Sigmoid colon (tissue), 7 donors: ENCODE measurements at regions of chr3 and their contacts with region 1.

Region 1: GRCh38 chr3:32947789-32948238 is 3.6 kb upstream of the CCR4 start:
- DNase-seq: peak; percentile 77
- H3K4me3 ChIP-seq: no peak overlapping the region
- H3K27ac ChIP-seq: no peak overlapping the region
- H3K4me1 ChIP-seq: no peaks in the 10 kb centered on the region
- H3K27me3 ChIP-seq: no peaks in the 10 kb centered on the region
- CTCF ChIP-seq: peak; percentile 9 to 55 (median 46)
- EP300 ChIP-seq: no peak
- POLR2A ChIP-seq: no peak

Region 2: DNA sequence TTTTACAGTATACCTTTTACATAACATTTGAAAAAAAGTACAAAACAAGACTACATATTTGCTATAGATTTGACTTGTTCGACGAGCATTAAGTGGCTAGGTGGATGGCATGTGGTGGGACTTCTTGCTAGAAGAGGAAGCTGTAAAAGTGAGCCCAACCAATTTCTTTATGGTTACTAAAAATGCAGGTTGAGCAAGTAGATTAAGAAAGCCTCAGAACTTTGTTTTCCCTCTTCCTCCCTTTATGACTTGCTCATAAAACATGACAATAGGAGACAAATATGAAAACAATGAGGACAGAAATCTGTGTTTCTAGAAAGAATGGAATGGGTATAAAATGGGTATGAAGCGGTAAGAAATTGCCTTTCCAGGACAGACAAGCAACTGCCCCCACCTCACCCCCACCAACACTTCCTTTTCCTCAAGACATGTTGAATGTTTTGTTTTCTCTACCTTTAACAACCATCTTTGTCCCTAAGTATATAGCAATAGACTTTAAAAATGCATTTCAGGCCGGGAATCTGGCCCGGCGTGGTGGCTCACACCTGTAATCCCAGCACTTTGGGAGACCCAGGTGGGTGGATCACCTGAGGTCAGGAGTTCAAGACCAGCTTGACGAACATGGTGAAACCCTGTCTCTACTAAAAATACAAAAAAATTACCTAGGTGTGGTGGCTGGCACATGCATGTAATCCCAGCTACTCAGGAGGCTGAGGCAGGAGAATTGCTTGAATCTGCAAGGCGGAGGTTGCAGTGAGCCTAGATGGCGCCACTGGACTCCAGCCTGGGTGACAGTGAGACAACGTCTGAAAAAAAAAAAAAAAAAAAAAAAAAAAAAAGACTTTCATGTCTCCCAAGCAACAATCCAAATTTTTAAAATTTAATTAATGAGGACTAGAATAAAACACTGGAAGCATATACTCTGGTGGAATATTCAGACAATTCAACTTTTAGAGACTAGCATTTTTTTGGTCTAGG is 46.1 kb before region 1 on chr3:
- intact Hi-C with region 1: no loop called
- DNase-seq: no peak
- H3K4me3 ChIP-seq: no peak overlapping the region
- H3K27ac ChIP-seq: no peak overlapping the region
- H3K4me1 ChIP-seq: no peaks in the 10 kb centered on the region
- H3K27me3 ChIP-seq: peaks cover 0 to 11% (median 0%) of the 10 kb centered on the region in 3 donors
- CTCF ChIP-seq: no peak
- EP300 ChIP-seq: no peak
- POLR2A ChIP-seq: no peak

Region 3: DNA sequence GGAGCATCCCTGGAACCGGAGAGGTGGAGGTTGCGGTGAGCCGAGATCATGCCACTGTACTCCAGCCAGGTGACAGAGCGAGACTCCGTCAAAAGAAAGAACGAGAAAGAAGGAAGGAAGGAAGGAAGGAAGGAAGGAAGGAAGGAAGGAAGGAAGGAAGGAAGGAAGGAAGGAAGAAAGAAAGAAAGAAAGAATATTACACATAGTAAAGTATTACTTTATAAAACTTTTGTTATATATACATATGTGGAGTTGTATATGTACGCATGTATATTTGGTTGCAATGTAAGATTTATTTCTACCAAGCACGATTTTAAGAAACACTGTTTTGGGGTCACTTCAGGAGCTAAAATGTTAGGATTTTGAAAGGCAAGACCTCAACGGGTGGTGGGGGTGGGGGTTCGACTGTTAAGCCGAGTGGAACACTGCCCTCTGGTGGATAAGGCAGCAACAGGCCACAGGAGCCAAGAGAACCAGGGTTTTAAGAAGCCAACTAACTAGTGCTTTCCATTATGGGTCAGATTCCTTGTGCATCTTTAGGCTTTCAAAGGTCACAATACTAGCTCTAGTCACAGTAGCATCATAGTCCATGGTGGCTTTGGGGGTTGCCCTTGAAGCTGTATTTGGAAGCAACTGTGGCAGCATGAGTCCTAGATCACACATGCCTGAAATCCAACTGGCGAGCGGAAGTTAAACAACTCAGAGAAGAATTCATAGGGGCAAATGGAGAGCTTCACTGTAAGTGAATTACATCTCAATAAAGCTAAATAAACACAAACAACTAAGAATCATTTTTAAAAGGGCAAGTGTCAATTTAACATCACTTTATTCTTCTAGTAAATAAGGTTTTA is 126.6 kb after region 1 on chr3:
- intact Hi-C with region 1: loop called (anchors 5 kb)
- DNase-seq: no peak
- H3K4me3 ChIP-seq: no peak overlapping the region
- H3K27ac ChIP-seq: no peak overlapping the region
- H3K4me1 ChIP-seq: peaks cover 0 to 11% (median 3%) of the 10 kb centered on the region in 4 donors
- H3K27me3 ChIP-seq: no peaks in the 10 kb centered on the region
- CTCF ChIP-seq: peak in 3 of 4 experiments; percentile 65 to 77 (median 77)
- EP300 ChIP-seq: no peak
- POLR2A ChIP-seq: no peak

Region 4: DNA sequence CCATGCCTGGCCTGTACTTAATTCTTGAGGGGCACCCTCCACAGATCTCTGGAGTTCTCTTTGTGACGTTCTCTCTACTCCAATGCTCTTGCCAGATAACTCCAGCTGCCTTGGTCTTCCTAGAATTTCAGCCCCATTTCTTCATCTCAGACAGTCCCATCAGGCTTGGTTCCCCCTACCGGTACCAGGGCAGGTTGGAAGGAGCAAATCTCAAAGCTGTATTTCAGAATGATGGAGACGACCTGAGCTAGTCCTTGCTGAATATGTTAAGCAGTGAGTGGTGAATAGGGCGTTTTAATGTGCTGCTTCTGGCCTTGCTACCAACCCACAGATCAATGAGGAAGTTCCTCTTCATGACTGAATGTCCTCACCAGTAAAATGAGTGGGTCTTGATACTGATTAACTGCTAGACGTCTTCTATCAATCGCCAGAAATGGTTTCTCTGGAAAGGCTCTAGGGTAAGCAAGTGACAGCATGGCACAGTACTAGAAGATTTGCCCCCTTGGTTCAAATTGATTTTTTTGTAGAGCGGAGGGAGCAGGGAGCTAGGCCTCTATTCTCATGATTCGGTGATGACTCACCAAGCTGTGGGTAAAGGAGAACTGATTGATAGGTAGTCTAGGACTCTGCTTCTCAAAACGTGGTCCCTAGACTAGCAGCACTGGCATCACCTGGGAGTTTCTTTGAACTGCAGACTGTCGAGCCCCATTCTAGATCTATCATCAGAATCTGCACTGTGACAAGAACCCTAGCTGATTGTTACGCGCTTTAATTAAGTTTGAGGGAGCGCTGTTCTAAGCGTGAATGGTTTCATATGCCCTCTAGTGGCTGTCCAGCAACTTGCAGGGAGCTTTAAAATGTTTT is 424.6 kb after region 1 on chr3:
- intact Hi-C with region 1: loop called (anchors 10 kb)
- DNase-seq: no peak
- H3K4me3 ChIP-seq: no peak overlapping the region
- H3K27ac ChIP-seq: no peak overlapping the region
- H3K4me1 ChIP-seq: peaks cover 0 to 9% (median 4%) of the 10 kb centered on the region in 4 donors
- H3K27me3 ChIP-seq: no peaks in the 10 kb centered on the region
- CTCF ChIP-seq: peak; percentile 71 to 91 (median 84)
- EP300 ChIP-seq: no peak
- POLR2A ChIP-seq: no peak